ENCODE measurements at regions of chr12 and their contacts with region 1.

Region 1: DNA sequence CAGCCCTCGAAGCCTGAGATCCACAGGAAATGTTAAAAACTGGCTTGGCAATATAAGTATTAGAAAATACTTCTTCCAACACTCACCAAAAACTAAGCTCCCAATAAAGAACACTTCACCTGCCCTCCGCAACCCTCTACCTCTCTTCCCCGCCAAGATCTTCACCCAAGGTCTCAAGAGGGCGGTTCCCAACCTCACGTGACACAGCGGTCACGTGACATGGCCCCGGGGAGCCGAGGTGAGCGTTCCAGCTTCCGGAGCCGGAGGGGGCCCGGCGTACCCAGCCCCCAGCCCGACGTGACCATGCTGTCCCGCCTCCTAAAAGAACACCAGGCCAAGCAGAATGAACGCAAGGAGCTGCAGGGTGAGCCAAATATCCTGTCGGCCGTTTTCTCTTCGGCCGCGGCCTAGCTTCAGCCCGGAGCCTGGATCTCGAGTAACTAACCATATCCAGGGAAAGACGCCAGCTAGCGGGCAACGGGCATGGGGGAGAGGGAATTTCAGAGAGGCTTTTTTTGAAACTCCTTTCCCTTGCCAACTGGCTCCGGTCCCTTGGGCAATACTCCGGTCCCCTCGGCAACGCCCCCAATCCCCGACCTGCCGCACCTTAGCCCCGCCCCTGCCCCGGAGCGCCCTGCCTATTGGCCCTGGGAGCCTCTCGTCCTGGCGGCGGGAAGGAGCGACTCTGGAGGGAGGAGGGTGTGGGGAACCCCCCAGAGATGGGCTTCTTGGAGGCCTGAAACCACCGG is at the start of gene BLOC1S1:
- DNase-seq: peak; percentile 89
- H3K4me3 Mint-ChIP-seq: peak within 1 kb of the TSS; percentile 91
- H3K27ac Mint-ChIP-seq: peak within 1 kb of the TSS; percentile 88
- H3K4me1 Mint-ChIP-seq: peaks cover 24% of the 10 kb centered on the region
- H3K27me3 Mint-ChIP-seq: peaks cover 8% of the 10 kb centered on the region
- total RNA-seq, gene BLOC1S1: 72.3 and 73.9 TPM in 2 replicates

Region 2: GRCh38 chr12:55647027-55647426 is 69.0 kb before region 1 on chr12:
- intact Hi-C with region 1: loop called (anchors 2 kb)
- DNase-seq: no peak
- H3K4me3 Mint-ChIP-seq: no peak overlapping the region
- H3K27ac Mint-ChIP-seq: no peak overlapping the region
- H3K4me1 Mint-ChIP-seq: peaks cover 27% of the 10 kb centered on the region
- H3K27me3 Mint-ChIP-seq: no peaks in the 10 kb centered on the region

Region 3: GRCh38 chr12:55681142-55682077 is 34.6 kb before region 1 on chr12:
- intact Hi-C with region 1: no loop called
- DNase-seq: no peak
- H3K4me3 Mint-ChIP-seq: no peak overlapping the region
- H3K27ac Mint-ChIP-seq: no peak overlapping the region
- H3K4me1 Mint-ChIP-seq: peaks cover 2% of the 10 kb centered on the region
- H3K27me3 Mint-ChIP-seq: peaks cover 18% of the 10 kb centered on the region

Region 4: DNA sequence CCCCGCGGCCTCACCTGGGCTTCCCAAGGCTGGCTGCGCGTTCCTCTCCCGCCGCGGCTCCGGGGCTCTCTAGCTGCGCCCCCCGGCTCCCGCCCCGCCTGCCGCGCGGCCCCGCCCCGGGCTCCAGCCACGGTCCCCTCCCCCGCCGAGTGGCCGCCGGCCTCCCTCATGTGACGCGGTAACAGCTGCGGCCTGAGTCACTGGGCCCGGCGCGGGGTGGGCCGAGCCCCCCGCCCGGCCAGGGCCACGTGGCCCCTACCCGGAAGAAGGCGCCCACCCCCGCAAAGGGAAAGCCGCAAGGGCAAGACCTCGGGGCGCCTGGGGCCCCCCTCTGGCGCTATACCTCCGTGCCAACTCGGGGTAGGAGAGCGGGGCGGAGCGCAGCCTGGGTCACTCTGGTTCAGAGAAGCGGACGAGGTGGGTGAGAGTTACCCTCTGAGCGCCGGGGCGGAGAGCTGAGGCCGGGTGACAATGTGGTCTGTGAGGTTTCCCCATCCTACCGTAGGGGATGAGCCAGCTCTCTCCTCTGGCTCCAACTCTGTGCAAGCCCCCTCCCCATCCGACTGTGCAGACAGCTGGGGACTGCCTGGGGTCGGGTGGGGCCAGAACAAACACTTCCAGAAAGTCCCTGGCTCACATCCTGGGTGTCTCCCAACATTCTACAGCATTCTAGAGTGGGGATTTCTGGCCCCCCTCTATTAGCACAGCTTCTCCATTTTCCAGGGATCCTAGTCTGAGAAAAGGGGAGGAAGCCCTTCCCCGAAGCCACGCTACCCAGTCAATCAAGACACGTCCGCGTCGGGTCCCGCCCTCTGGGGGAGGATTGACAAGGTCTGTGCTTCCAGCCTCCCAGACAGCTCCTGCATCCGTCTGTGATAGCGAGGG is 13.2 kb after region 1 on chr12 and contains the start of gene CD63:
- intact Hi-C with region 1: loop called (anchors 1 kb)
- DNase-seq: peak; percentile 44
- H3K4me3 Mint-ChIP-seq: peak within 1 kb of the TSS; percentile 85
- H3K27ac Mint-ChIP-seq: peak within 1 kb of the TSS; percentile 91
- H3K4me1 Mint-ChIP-seq: peaks cover 29% of the 10 kb centered on the region
- H3K27me3 Mint-ChIP-seq: no peaks in the 10 kb centered on the region
- total RNA-seq, gene CD63: 230 and 236 TPM in 2 replicates

Region 5: DNA sequence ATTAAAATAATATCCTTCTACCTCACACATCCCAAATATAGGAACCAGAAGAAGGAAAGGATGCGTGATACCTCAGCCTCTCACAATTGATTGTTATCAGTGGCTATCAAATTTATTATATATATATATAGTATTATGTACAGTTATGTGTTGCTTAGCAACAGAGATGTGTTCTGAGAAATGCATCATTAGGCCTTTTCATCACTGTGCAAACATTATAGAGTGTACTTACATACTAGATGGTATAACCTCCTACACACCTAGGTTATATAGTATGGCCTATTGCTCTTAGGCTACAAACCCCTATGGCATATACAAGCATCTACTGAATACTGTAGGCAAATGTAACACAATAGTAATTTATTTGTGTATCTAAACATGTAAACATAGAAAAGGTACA is 177.7 kb after region 1 on chr12:
- intact Hi-C with region 1: no loop called
- DNase-seq: no peak
- H3K4me3 Mint-ChIP-seq: no peak overlapping the region
- H3K27ac Mint-ChIP-seq: no peak overlapping the region
- H3K4me1 Mint-ChIP-seq: peaks cover under 1% of the 10 kb centered on the region
- H3K27me3 Mint-ChIP-seq: no peaks in the 10 kb centered on the region